ENCODE measurements at regions of chr6 and their contacts with region 1.

Region 1: GRCh38 chr6:135423649-135424128 is 73.9 kb downstream of the AHI1 start:
- DNase-seq: peak in 1 of 2 donors; percentile 4
- ATAC-seq: peak in 4 of 8 donors; percentile 44 to 69 (median 52)
- H3K4me3 ChIP-seq: no peak overlapping the region
- H3K27ac ChIP-seq: no peak overlapping the region
- H3K4me1 ChIP-seq: peaks cover 0 to 9% (median 0%) of the 10 kb centered on the region in 9 donors
- H3K27me3 ChIP-seq: no peaks in the 10 kb centered on the region
- CTCF ChIP-seq: peak in 8 of 9 donors; percentile 47 to 72 (median 62)

Region 2: GRCh38 chr6:134152767-134153485 is 1270.8 kb before region 1 on chr6:
- intact Hi-C with region 1: loop called in 2 of 10 experiments (anchors 10 kb)
- DNase-seq: no peak
- ATAC-seq: peak in 1 of 8 donors; percentile 35
- H3K4me3 ChIP-seq: no peak overlapping the region
- H3K27ac ChIP-seq: no peak overlapping the region
- H3K4me1 ChIP-seq: peaks cover 0 to 5% (median 0%) of the 10 kb centered on the region in 9 donors
- H3K27me3 ChIP-seq: no peaks in the 10 kb centered on the region
- CTCF ChIP-seq: no peak

Region 3: GRCh38 chr6:135145063-135145800 is 278.5 kb before region 1 on chr6:
- intact Hi-C with region 1: loop called (anchors 2 to 10 kb)
- DNase-seq: no peak
- ATAC-seq: no peak
- H3K4me3 ChIP-seq: peak overlapping the region in 1 of 10 donors; percentile 18
- H3K27ac ChIP-seq: no peak overlapping the region
- H3K4me1 ChIP-seq: peaks cover 0 to 18% (median 0%) of the 10 kb centered on the region in 9 donors
- H3K27me3 ChIP-seq: no peaks in the 10 kb centered on the region
- CTCF ChIP-seq: peak in 7 of 9 donors; percentile 29 to 61 (median 48)

Region 4: DNA sequence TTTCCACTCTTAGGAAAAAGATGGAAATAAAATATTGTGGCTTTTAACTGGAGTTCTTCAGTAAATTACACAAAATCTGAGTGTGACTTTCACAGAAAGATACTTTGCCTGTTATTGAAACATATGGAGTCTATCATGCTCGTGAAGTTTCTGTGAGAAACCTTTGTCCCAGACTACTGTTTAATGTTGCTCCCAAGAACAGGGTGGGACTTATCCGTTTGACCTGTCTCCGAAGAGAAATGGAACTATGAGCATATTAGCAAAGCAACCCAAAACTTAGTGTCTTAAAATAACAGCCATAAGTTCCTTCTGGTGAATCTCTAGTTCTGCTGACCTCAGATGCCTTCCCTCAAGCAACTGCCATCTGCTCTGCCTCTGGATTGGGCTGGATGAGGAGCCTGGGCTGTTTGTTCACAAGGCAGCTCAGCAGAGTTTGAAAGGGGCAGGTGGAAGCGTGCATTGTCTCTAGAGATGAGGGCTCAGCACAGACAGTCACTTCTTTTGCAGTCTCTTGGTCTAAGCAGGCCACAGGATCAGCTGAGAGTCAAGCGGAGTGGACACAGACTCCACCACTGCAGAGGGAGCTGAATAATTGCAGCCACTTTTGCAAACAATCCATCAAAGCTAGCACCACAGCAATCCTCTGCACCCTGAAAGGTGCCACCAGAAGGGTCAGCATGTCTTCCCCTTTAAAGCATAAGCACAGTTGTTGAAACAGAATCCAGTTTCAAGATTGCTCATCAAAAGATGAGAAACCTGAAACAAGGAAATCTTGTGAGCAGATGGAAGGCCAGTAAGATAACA is 189.8 kb before region 1 on chr6:
- intact Hi-C with region 1: no loop called
- DNase-seq: no peak
- ATAC-seq: no peak
- H3K4me3 ChIP-seq: no peak overlapping the region
- H3K27ac ChIP-seq: no peak overlapping the region
- H3K4me1 ChIP-seq: peaks cover 0 to 4% (median 0%) of the 10 kb centered on the region in 9 donors
- H3K27me3 ChIP-seq: peaks cover 0 to 10% (median 3%) of the 10 kb centered on the region in 7 donors
- CTCF ChIP-seq: no peak

Region 5: DNA sequence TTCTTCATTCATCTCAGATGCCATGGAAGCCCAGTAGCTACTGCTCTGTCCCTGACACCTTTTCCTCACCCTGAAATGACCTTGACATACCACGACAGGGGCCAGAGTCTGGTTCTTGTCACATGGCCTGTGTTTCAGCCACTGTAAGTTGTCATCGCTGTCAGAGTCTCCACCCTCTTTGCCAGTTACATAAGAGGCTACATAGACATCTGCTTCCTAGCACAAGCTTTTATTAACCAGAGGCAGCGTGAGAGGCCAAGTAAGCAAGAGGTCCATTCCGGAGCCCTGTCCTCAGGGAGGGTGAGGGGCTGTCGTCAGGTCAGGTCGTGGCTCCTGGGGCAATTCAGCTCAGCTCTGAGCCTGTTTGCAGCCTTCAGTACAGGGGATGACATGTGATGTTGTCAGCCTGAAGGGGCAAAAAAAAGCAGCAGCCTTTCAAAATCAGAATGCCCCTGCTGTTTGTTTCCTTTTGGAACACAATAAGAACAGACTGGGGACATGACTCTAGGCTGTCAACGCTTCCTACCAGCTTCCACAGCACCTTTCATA is 680.1 kb after region 1 on chr6:
- intact Hi-C with region 1: no loop called
- DNase-seq: peak; percentile 76 to 89
- ATAC-seq: peak; percentile 95 to 99 (median 97)
- H3K4me3 ChIP-seq: peak overlapping the region in 3 of 10 donors; percentile 7 to 14 (median 13)
- H3K27ac ChIP-seq: peak overlapping the region; percentile 54 to 92 (median 84)
- H3K4me1 ChIP-seq: peaks cover 25 to 81% (median 55%) of the 10 kb centered on the region in 9 donors
- H3K27me3 ChIP-seq: no peaks in the 10 kb centered on the region
- CTCF ChIP-seq: no peak

Measured in heart right ventricle (tissue), 16 donors.